H1 (cell line): ENCODE measurements at regions of chr4 and their contacts with region 1.

Region 1: DNA sequence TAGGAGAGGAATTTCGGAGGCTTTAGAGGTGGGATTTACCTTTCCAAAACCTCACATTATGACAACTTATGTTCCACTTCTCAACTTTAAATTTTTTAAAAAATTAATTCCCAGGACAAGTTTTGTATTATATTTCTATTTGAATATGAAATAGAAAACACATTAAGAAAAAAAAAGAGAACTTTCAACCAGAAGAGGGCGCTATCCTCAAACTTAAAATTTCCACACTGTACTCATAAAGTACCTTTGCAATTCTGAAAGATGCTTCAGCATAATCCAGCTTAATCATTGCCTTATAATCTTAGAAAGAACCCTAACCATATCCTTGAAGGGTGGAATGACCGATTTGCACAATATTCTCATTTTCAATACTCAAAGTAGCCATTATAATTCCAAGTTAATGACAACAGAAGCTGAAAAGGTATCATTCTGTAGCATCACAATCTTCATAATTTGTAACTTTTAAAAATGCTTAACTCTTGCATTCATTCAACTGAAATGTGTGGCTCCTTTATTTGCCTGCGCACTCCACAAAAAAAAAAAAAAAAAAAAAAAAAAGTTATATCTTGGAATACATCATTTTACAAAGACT is 158.0 kb downstream of the KCNIP4 start:
- DNase-seq: no peak
- H3K4me3 ChIP-seq: no peak overlapping the region
- H3K27ac ChIP-seq: no peak overlapping the region
- H3K4me1 ChIP-seq: no peaks in the 10 kb centered on the region
- H3K27me3 ChIP-seq: no peaks in the 10 kb centered on the region
- CTCF ChIP-seq: peak in 2 of 3 experiments; percentile 14 to 25; a peak in 2 of 4 replicates
- EP300 ChIP-seq: no peak
- POLR2A ChIP-seq: no peak
- RAD21 ChIP-seq: peak; percentile 55 to 68

Region 2: GRCh38 chr4:21802406-21802805 is 11.9 kb after region 1 on chr4:
- CTCF ChIA-PET with region 1: interaction called, 14 read pairs
- POLR2A ChIA-PET with region 1: no interaction called
- DNase-seq: no peak
- H3K4me3 ChIP-seq: no peak overlapping the region
- H3K27ac ChIP-seq: no peak overlapping the region
- H3K4me1 ChIP-seq: no peaks in the 10 kb centered on the region
- H3K27me3 ChIP-seq: no peaks in the 10 kb centered on the region
- CTCF ChIP-seq: no peak
- EP300 ChIP-seq: no peak
- POLR2A ChIP-seq: no peak
- RAD21 ChIP-seq: no peak

Region 3: GRCh38 chr4:21948347-21949072 is 158.0 kb after region 1 on chr4 and contains the start of gene KCNIP4:
- CTCF ChIA-PET with region 1: interaction called, 14 read pairs
- POLR2A ChIA-PET with region 1: no interaction called
- DNase-seq: peak in 1 of 2 experiments; percentile 77
- H3K4me3 ChIP-seq: peak within 1 kb of the TSS; percentile 46 to 73 (median 56)
- H3K27ac ChIP-seq: no peak within 1 kb of the TSS
- H3K4me1 ChIP-seq: peaks cover 0 to 3% (median under 1%) of the 10 kb centered on the region in 4 experiments; a peak in 1 of 7 replicates
- H3K27me3 ChIP-seq: peaks cover 13 to 30% (median 26%) of the 10 kb centered on the region in 4 experiments
- CTCF ChIP-seq: peak; percentile 0 to 47 (median 20); a peak in 2 of 4 replicates
- EP300 ChIP-seq: no peak
- POLR2A ChIP-seq: no peak
- RAD21 ChIP-seq: no peak; a peak in 2 of 4 replicates
- total RNA-seq, gene KCNIP4: not detected in 2 replicates

Region 4: GRCh38 chr4:22237155-22237751 is 446.7 kb after region 1 on chr4:
- CTCF ChIA-PET with region 1: interaction called, 33 read pairs
- POLR2A ChIA-PET with region 1: no interaction called
- DNase-seq: peak; percentile 43 to 94
- H3K4me3 ChIP-seq: no peak overlapping the region
- H3K27ac ChIP-seq: no peak overlapping the region
- H3K4me1 ChIP-seq: peaks cover 0 to 4% (median 0%) of the 10 kb centered on the region in 4 experiments; a peak in 1 of 7 replicates
- H3K27me3 ChIP-seq: no peaks in the 10 kb centered on the region
- CTCF ChIP-seq: peak; percentile 81 to 98 (median 97)
- EP300 ChIP-seq: no peak
- POLR2A ChIP-seq: no peak
- RAD21 ChIP-seq: peak; percentile 73 to 76